GM13976 (cell line): ENCODE measurements at regions of chr1 and their contacts with region 1.

Region 1: DNA sequence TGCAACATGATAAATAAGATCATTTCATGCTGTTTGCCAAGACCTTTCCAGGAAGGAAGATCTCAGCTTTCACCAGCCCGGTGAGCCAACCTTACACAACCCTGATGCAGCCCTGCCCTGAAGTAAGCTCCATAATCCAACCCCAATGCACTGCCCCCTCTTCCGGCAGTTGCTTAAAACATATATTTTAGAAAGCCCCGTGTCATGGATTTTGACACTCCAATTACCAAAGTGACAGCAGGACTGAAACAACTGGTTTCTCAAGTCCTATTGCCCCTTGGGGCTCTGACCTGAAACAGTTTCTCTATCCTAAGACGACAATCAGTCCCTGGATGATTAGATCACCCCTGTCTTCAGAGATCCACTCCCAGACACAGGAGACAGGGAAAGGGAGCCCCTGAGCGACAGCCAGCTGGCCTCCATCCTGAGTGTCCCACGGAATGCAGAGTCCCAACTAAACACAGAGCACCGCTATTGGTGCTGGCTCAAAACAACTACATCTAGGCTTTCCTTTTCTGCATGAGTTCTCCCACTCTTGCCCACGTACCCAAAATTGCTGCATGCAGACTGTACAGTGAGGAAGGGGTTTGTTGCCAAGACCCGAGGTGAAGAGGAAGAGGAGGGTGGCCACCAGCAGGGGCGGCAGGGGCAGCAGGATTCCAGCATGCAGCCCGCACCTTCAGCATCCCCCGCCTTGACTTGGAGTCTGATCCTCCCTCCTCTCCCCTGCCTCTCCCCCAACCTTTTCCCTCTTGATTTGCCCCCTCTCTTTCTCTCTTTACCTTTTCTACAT is 7.8 kb downstream of the S100A9 start:
- DNase-seq: no peak
- CTCF ChIP-seq: no peak

Region 2: DNA sequence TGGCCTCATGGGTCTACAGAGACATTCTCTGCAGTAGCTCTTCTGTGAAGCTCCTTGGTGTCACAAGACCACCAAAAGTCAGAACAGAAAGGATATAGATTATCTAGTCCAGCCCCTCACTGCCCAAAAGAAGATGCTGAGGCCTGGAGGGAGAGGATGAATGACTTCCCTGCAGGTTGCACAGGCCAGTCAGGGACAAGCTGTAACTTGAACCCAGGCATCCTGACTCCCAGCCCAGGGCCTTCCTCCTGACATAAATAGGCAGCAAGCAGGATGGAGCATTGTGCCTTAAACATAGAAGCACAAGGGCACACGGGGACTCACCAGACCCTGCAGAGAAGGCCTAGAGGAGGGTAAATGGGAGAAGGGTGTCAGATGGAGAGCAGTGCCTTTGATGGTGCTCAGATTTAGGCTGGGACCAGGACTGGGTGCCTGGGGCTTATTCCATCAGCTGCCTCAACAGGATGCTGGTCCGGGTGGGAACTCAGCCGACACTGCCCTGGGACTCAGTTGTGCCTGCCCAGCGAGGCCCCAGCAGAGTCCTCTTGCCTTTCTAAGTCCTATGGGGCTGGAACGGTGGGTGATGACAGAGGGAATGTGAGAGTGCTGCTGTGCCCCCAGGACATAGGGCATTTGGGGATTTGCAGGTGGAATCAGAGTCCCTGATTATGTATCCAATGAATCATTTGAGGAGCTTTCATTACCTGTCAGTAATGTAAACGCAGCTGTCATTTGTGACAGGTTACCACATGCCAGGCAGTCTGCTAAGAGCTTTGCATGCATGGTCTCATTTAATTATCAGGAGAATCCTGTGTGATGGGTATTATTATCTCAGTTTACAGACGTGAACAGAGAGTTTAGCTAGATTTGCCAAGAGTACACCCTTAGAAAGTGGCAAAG is 64.0 kb after region 1 on chr1:
- in situ Hi-C with region 1: loop called (anchors 10 kb)
- DNase-seq: no peak
- CTCF ChIP-seq: no peak